Activated naive CD4-positive, alpha-beta T cell treated with anti-CD3 and anti-CD28 coated beads, Interleukin-2, amount 10 ng/mL, durations not matched to agents 7 days and 5 days (primary cell): ENCODE measurements at regions of chr14 and their contacts with region 1.

Region 1: DNA sequence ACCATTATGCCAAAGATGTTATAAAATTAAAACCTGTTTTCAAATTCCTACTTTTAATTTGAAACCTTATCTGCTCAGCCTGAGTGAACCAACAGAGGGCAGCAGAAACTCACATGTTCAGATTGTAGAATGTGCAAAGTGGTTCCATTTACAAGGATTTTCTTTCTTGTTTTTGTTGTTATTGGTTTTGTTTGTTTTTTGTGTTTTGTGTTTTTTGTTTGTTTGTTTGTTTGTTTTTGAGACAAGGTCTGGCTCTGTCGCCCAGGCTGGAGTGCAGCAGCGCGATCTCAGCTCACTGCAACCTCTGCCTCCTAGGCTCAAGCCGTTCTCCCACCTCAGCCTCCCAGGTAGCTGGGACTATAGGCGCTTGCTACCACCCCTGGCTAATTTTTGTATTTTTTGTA is 22.8 kb upstream of the GARIN2 start:
- DNase-seq: peak; percentile 61
- H3K4me3 Mint-ChIP-seq: no peak overlapping the region
- H3K27ac Mint-ChIP-seq: no peak overlapping the region
- H3K4me1 Mint-ChIP-seq: no peaks in the 10 kb centered on the region
- H3K27me3 Mint-ChIP-seq: no peaks in the 10 kb centered on the region

Region 2: DNA sequence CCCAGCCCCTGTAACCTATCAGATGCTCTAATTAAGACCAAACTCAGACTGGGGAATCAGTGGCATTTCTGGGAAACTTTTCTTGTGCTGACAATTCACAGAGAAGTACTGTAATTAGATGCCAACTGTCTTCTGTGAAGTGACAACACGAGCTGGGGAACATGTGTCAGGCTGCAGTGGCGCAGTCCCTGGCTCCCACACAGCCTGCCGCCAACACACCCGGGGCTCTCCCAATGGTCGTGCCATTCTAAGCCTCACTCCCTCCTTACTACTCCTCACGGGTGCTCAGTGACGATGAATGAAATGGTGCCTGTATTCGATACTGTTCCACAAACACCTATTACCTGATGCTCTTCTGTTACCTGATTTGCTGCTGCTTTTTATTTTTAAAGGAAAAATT is 41.4 kb after region 1 on chr14:
- CTCF ChIA-PET with region 1: no interaction called
- DNase-seq: no peak
- H3K4me3 Mint-ChIP-seq: no peak overlapping the region
- H3K27ac Mint-ChIP-seq: no peak overlapping the region
- H3K4me1 Mint-ChIP-seq: no peaks in the 10 kb centered on the region
- H3K27me3 Mint-ChIP-seq: peaks cover 4% of the 10 kb centered on the region

Region 3: DNA sequence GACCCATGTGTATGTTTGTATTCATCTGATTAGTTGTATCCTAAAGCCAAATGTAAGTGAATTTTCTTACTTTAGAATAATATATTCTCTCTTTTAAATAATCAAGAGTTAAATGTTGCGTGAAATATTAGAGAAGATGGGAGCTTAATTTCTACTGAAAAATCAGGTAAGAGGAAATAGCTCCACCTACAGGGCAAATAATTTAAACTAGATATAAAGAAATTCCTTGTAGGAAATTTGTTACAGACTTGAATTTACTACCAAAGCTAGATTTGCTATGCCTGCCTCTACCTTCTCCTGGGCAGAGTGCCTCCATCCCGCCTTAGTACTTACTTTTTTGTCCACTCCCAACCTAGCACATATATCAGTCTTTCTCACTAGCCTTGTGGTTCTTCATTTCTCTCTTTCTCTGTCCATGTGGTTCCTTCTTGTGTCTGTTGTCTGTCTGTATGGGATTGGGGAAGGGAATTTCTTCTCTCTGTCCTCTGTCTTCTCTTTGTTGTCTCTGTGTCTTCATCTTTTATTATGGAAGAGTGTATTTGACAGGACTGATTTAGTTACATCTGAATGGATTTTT is 119.5 kb after region 1 on chr14:
- CTCF ChIA-PET with region 1: interaction called, 44 read pairs
- DNase-seq: no peak
- H3K4me3 Mint-ChIP-seq: no peak overlapping the region
- H3K27ac Mint-ChIP-seq: no peak overlapping the region
- H3K4me1 Mint-ChIP-seq: no peaks in the 10 kb centered on the region
- H3K27me3 Mint-ChIP-seq: no peaks in the 10 kb centered on the region

Region 4: GRCh38 chr14:67335781-67336180 is 169.3 kb after region 1 on chr14:
- CTCF ChIA-PET with region 1: no interaction called
- DNase-seq: no peak
- H3K4me3 Mint-ChIP-seq: no peak overlapping the region
- H3K27ac Mint-ChIP-seq: no peak overlapping the region
- H3K4me1 Mint-ChIP-seq: no peaks in the 10 kb centered on the region
- H3K27me3 Mint-ChIP-seq: no peaks in the 10 kb centered on the region

Region 5: GRCh38 chr14:67359775-67360648 is 193.6 kb after region 1 on chr14 and contains the starts of genes ATP6V1D and EIF2S1:
- CTCF ChIA-PET with region 1: interaction called, 13 read pairs
- DNase-seq: peak; percentile 99
- H3K4me3 Mint-ChIP-seq: peak within 1 kb of the TSS; percentile 97
- H3K27ac Mint-ChIP-seq: peak within 1 kb of the TSS; percentile 95
- H3K4me1 Mint-ChIP-seq: peaks cover 60% of the 10 kb centered on the region
- H3K27me3 Mint-ChIP-seq: no peaks in the 10 kb centered on the region